ENCODE measurements at regions of chr11 and their contacts with region 1.

Region 1: GRCh38 chr11:2151500-2152257 is 9.3 kb downstream of the INS start:
- DNase-seq: peak; percentile 91
- H3K4me3 ChIP-seq: no peak overlapping the region
- H3K27ac ChIP-seq: no peak overlapping the region
- H3K4me1 ChIP-seq: peaks cover 4% of the 10 kb centered on the region
- H3K27me3 ChIP-seq: no peaks in the 10 kb centered on the region
- CTCF ChIP-seq: peak; percentile 75 to 97 (median 96)
- POLR2A ChIP-seq: no peak

Region 2: DNA sequence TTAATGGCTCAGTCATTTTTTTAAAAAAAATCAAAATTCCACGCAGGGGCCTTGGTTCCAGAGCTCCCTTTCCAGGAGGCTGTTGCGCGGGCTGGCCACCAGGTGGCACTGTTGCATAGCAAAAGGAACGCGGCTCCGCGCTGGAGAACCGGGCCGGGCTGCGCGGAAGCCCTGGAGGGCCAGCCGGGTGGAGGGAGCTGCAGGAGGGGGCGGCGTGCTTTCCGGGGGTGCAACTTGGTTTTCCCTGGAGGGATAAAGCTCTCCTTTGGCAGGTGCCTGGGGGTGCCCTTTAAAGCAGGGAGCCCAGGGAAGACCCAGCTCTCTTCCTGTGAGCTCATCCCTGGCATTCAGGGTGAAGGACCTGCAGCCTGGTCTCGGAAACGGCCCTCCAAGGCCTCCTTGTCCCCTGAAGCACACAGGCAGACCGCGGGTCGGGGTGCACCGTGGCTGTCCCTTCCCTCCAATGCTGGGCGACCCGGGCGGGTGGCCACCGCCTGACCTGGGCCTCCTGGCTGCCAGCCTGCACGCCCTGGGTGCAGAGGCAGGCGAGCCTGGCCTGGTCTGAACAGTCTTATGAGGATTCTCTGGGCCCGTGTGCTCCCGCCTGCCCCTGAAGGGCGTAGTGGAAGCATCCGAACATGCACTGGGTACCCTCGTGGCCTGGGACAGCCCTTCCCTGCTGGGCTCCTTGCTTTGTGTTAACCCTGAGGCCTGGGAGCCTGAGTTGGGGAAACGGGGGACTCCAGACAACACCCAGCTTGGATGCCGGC is 498.7 kb before region 1 on chr11:
- intact Hi-C with region 1: loop called (anchors 10 kb)
- DNase-seq: peak; percentile 88
- H3K4me3 ChIP-seq: no peak overlapping the region
- H3K27ac ChIP-seq: no peak overlapping the region
- H3K4me1 ChIP-seq: no peaks in the 10 kb centered on the region
- H3K27me3 ChIP-seq: no peaks in the 10 kb centered on the region
- CTCF ChIP-seq: peak; percentile 97 to 99 (median 98)
- POLR2A ChIP-seq: no peak

Region 3: DNA sequence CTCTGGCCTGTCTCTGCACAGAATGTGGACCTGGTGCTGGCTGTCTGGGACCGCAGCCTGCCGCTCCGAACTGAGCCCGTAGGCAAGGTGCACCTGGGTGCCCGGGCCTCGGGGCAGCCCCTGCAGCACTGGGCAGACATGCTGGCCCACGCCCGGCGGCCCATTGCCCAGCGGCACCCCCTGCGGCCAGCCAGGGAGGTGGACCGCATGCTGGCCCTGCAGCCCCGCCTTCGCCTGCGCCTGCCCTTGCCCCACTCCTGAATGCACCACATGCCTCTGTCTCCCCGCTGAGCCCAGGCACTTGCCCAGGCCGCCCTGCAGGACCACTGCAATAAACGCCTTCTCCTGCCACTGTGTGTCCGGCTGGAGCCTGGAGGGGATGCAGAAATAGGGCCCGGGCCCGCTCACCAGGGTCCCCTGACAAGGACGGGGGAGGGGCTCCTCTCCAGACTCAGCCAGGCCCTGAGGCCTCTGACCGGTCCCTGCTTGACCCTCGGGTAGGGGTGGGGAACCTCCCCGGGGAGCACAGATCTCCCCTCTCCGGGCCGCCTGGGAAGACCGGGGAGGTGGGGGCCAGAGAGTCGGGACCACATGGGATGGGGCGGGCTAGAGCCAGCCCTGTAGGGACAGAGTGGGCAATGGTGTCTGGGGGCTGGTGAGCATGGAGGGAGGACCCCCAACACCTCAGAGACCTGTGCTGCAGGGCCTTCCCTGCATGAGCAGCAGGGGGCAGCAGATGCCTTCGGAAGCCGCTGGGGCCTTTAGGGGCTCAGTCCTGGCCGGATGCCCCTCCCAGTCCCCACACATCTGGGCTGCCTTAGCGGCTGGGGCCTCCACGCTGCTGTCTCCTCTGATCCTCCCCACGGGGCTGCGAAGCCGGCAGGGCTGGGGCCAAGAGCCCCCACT is 314.3 kb before region 1 on chr11:
- intact Hi-C with region 1: loop called (anchors 10 kb)
- DNase-seq: peak; percentile 56
- H3K4me3 ChIP-seq: no peak overlapping the region
- H3K27ac ChIP-seq: no peak overlapping the region
- H3K4me1 ChIP-seq: no peaks in the 10 kb centered on the region
- H3K27me3 ChIP-seq: no peaks in the 10 kb centered on the region
- CTCF ChIP-seq: peak; percentile 78 to 82 (median 81)
- POLR2A ChIP-seq: no peak